ENCODE measurements at regions of chr9 and their contacts with region 1.

Region 1: DNA sequence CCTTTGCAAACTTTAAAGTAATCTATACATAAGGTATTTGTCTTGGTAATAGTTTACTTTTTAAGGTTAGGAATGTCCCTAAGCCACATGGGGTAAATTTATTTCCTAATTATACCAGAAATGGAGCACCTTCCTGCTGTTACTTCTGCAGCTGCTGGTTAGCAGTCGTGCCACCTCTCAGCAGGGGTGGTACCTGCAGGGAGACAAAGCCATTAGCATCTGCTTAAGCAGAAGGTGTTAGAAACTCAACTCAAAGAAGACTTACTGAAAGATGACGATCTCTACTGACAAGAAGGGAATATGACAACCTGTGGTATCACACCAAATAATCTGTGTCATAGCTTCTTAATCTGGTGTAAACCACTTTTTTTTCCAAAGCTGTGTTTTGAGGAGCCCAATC is 173.7 kb downstream of the BRINP1 start:
- DNase-seq: no peak
- ATAC-seq: no peak
- H3K4me3 ChIP-seq: no peak overlapping the region
- H3K27ac ChIP-seq: no peak overlapping the region
- H3K4me1 ChIP-seq: no peaks in the 10 kb centered on the region
- H3K27me3 ChIP-seq: no peaks in the 10 kb centered on the region
- CTCF ChIP-seq: no peak
- POLR2A ChIP-seq: no peak
- RAD21 ChIP-seq: no peak

Region 2: DNA sequence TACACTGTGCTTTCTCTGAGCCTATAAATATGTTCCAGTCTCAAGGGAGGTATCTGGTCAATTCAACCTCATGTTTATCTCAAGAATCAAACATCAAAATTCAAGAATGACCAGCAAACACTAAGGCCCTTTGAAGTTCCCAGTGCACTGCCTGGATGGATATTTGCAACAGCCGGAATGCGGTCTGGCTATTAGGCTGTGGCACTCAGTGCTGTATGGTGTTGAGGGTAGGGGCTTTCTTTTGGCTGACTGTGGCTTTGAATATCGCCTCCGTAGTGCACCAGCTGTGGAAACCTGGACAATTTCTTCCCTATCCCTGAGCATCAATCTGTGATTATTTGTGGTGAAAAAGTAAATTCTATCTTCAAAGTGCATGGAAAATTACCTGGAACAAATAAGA is 46.7 kb before region 1 on chr9:
- CTCF ChIA-PET with region 1: no interaction called
- POLR2A ChIA-PET with region 1: no interaction called
- dilution Hi-C with region 1: no loop called
- in situ Hi-C with region 1: no loop called
- intact Hi-C with region 1: loop called (anchors 10 kb)
- DNase-seq: no peak
- ATAC-seq: no peak
- H3K4me3 ChIP-seq: no peak overlapping the region
- H3K27ac ChIP-seq: no peak overlapping the region
- H3K4me1 ChIP-seq: no peaks in the 10 kb centered on the region
- H3K27me3 ChIP-seq: no peaks in the 10 kb centered on the region
- CTCF ChIP-seq: no peak
- POLR2A ChIP-seq: no peak
- RAD21 ChIP-seq: no peak

Measured in IMR-90 (cell line).